GM23248 (cell line): ENCODE measurements at regions of chr17 and their contacts with region 1.

Region 1: DNA sequence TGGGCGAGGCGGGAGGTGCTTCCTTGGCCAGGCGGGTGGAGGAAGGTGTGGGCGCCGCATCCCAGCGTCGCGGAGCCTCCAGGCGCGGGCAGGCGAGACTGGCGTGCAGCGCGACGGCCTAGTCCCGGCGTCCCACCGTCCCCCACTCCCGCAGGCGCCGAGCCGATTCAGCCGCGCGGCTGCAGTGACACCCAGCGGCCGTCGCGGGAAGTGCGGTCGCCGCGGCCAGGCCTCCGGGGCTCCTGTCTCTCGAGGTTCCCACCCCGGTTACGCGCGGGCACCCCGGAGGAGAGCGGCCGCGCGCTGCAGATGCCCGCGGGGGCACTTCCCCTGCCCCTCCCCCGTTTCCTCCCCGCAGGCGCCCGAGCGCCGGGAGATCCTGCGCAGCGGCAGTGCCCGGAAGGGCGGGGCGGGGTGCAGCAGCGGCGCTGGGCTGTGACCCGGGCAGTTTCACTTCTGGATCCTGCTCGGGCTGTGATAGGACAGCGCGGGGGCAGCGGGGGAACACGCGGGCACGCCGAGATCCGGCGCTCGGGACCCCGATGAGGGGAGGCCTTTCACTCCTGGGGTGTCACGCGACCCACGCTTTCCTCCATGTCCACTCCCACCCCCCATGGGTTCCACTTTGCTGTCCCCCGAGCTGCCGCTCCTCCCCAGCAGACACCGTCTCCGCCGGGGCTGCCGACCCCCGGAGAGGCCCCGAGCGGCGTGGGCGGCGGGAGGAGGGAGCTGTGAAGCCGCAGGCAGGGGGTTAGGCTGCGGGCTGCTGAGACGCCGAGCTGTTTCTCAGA is 16.6 kb downstream of the GRB7 start:
- DNase-seq: peak; percentile 95
- H3K4me3 ChIP-seq: peak overlapping the region; percentile 81
- H3K27ac ChIP-seq: peak overlapping the region; percentile 44; the same call in 1 of the 2 replicates
- H3K4me1 ChIP-seq: no peaks in the 10 kb centered on the region
- H3K27me3 ChIP-seq: 0 out of 2 replicates have a peak, but pooled peaks cover 12% of the 10 kb centered on the region

Region 2: DNA sequence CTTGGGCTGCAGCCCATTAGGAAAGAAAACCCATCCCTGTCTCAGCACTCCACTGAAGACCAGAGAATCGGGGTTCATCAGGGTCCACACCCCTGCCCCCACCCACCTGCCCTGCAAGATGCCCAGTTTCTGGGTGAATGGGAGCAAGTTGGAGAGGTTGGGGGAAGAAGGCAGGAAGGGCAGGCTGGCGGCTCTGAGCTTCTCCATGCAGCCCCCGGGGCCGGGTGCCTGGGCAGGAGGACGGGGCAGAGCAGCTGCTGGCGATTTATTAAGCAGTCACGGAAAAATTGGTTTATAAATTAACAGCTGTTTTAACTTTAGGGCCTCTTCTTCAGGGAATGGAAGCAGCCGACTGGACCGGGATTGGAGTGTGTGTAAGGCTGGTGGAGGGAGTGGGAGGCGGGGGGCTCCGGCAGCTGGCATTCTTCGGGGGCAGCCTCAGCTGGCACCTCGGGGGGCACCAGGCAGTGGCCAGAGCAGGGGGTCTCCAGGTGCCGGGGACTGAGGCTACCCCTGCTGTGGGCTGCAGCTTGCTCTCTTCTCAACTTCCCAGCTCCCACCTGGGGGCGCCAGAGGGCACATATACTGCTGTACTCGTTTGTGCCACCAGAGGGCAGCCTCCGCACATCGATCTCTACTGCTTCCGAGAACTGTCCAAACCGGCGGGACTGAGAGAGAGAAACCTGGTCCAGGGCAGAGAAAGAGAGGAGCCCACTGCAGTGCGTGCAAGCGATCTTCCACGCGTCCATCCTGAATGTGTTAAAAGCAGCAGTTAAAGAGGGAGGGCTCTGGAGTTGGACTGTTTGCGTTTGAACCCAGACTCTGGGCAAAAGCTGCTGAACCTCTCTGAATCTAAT is 132.6 kb before region 1 on chr17:
- in situ Hi-C with region 1: loop called (anchors 10 kb)
- DNase-seq: peak; percentile 85
- H3K4me3 ChIP-seq: peak overlapping the region; percentile 35; the same call in 1 of the 2 replicates
- H3K27ac ChIP-seq: no peak overlapping the region
- H3K4me1 ChIP-seq: no peaks in the 10 kb centered on the region
- H3K27me3 ChIP-seq: peaks cover 9% of the 10 kb centered on the region

Region 3: GRCh38 chr17:39699818-39700147 is 54.6 kb before region 1 on chr17 and contains the start of gene ERBB2:
- in situ Hi-C with region 1: no loop called
- DNase-seq: peak; percentile 84
- H3K4me3 ChIP-seq: peak within 1 kb of the TSS; percentile 81
- H3K27ac ChIP-seq: peak within 1 kb of the TSS; percentile 28; the same call in 1 of the 2 replicates
- H3K4me1 ChIP-seq: peaks cover 11% of the 10 kb centered on the region
- H3K27me3 ChIP-seq: no peaks in the 10 kb centered on the region
- total RNA-seq, gene ERBB2: 45.8 and 55.4 TPM in 2 replicates

Region 4: DNA sequence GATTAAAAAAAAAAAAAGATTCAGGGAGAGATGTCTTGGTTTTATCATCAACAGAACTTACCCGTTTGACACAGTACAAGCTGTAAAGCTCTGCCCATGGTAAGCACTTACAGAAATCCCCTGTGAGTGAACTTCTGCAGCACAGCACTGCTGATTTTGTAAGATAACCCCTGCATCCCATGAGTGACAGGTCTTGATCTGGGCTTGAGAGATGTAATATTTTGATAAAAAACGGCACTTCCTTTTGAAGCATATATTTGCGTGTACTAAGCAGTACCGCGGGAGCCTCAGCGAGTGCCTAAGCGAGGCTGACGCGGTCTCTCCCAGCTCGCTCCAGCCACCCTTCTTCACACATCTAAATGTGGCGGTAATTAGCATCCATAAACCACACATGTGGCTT is 59.3 kb after region 1 on chr17:
- in situ Hi-C with region 1: no loop called
- DNase-seq: no peak
- H3K4me3 ChIP-seq: no peak overlapping the region
- H3K27ac ChIP-seq: no peak overlapping the region
- H3K4me1 ChIP-seq: no peaks in the 10 kb centered on the region
- H3K27me3 ChIP-seq: peaks cover 54% of the 10 kb centered on the region

Region 5: DNA sequence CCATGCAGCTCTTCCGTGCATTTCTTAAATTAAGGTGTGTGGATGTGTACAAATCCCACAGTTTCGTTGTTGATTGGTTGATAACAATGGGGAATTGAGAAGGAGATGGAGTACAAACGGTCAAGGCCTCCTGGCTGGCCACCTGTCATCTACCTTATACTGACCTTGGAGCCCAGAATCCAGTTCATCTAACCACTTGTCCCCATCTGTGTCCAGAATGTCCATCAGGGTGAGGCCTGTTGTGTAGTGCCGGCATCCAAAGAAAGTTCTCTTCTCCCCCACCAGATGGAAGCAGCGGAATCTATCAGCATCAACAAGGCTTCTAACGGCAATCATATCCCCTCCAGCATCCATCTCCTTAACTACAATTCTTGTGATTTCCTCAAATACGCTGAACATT is 162.6 kb after region 1 on chr17:
- in situ Hi-C with region 1: no loop called
- DNase-seq: no peak
- H3K4me3 ChIP-seq: no peak overlapping the region
- H3K27ac ChIP-seq: no peak overlapping the region
- H3K4me1 ChIP-seq: no peaks in the 10 kb centered on the region
- H3K27me3 ChIP-seq: no peaks in the 10 kb centered on the region